ENCODE measurements at regions of chr2 and their contacts with region 1.

Region 1: GRCh38 chr2:232744963-232745362 is 31.4 kb downstream of the KCNJ13 start:
- DNase-seq: no peak
- H3K4me3 ChIP-seq: no peak overlapping the region
- H3K27ac ChIP-seq: no peak overlapping the region
- H3K4me1 ChIP-seq: no peaks in the 10 kb centered on the region
- H3K27me3 ChIP-seq: no peaks in the 10 kb centered on the region
- CTCF ChIP-seq: no peak

Region 2: GRCh38 chr2:232600053-232600773 is 144.8 kb before region 1 on chr2:
- CTCF ChIA-PET with region 1: no interaction called
- dilution Hi-C with region 1: no loop called
- in situ Hi-C with region 1: no loop called
- intact Hi-C with region 1: loop called (anchors 10 kb)
- DNase-seq: no peak
- H3K4me3 ChIP-seq: no peak overlapping the region
- H3K27ac ChIP-seq: no peak overlapping the region
- H3K4me1 ChIP-seq: no peaks in the 10 kb centered on the region
- H3K27me3 ChIP-seq: no peaks in the 10 kb centered on the region
- CTCF ChIP-seq: no peak

Measured in mammary epithelial cell (primary cell).